Psoas muscle (tissue), 8 donors: ENCODE measurements at regions of chr1 and their contacts with region 1.

Region 1: DNA sequence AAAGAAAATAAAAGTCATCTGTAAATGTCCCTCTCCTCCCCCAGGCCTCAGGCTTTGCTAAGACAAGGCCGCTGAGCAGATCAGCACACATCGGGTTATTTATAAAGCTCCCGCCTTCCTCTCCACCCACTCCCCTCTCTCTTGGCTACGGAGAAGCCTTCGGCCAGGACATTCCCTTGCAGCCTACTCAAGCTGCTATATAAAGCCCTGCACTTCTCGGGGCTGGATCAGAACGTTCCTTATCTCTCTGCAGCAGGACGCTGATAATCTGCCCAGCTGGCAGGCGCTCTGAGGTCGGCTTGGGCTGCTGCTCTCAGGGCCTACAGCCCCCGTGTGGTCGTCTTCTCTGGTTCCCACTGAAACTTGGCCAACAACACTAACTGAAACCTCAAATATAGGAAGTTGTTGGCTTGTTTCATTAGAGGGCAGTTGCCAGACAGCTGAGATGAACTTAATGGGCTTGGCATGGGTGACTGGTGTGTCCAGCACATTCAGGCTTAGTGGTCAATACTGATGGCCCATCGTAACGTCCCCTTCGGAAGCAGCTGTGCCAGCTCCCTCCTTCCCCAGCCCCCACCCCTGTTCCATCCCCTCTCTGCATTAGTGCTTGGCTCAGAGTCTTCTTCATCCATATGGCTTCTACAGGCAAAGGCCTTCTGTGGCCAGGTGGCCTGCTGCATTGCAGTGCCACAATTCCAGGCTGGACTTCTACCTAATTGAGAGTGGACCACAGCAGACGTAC is 64.6 kb downstream of the IER5 start:
- DNase-seq: peak; percentile 84 to 95
- ATAC-seq: peak; percentile 88 to 94 (median 90)
- H3K4me3 ChIP-seq: peak overlapping the region; percentile 2
- H3K27ac ChIP-seq: peak overlapping the region; percentile 96
- H3K4me1 ChIP-seq: peaks cover 49% of the 10 kb centered on the region
- H3K27me3 ChIP-seq: no peaks in the 10 kb centered on the region
- CTCF ChIP-seq: peak; percentile 35

Region 2: GRCh38 chr1:180502360-180503273 is 650.4 kb before region 1 on chr1 and contains the start of gene ACBD6:
- intact Hi-C with region 1: loop called in 1 of 2 experiments (anchors 10 kb)
- DNase-seq: peak; percentile 86 to 90
- ATAC-seq: peak; percentile 93 to 96 (median 94)
- H3K4me3 ChIP-seq: peak within 1 kb of the TSS; percentile 94
- H3K27ac ChIP-seq: peak within 1 kb of the TSS; percentile 92
- H3K4me1 ChIP-seq: peaks cover 26% of the 10 kb centered on the region
- H3K27me3 ChIP-seq: no peaks in the 10 kb centered on the region
- CTCF ChIP-seq: no peak
- total RNA-seq, gene ACBD6: 12.6 to 20.4 (median 15.0) TPM

Region 3: GRCh38 chr1:180988253-180988752 is 164.8 kb before region 1 on chr1:
- intact Hi-C with region 1: no loop called
- DNase-seq: no peak
- ATAC-seq: no peak
- H3K4me3 ChIP-seq: no peak overlapping the region
- H3K27ac ChIP-seq: no peak overlapping the region
- H3K4me1 ChIP-seq: no peaks in the 10 kb centered on the region
- H3K27me3 ChIP-seq: no peaks in the 10 kb centered on the region
- CTCF ChIP-seq: no peak

Region 4: DNA sequence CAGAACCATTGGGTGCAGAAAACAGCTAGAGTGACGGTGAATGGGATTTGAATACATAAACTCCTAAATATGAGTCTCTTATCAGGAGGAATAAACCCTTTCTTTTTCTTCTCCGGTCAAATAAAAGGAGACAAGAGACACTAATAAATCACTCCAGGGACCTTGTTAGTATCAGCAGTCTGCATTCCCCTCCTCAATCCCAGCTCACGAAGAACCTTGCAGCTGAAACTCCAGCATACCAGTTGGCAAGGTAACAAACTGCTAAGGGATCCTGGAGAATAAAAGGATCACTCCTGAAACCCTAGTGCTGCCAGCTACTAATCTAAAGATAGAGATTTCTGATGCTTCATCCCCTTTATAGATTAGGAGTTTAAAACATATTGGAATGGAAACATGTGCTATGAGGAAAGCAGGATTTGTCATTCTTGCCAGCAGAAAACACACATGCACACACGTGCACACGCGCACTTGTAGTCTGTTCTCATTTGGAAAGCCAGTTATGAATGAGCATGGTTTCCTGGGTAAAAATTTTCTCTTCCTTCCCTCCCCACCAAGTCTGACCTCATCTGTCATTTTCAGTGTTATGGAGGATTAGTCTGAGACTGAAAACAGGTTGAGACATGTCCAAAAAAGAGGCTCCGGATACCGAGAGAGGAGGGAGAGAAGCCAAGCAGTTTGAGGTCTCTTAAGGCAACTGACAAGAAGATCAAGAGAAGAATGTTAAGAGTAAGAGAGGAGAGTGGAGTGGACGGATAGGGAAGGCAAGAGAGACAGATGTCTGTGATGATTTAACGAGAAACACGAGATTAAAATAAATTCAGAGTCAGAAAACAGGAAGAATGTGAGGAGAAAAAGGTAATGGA is 53.7 kb before region 1 on chr1:
- intact Hi-C with region 1: no loop called
- DNase-seq: no peak
- ATAC-seq: peak in 1 of 4 donors; percentile 48
- H3K4me3 ChIP-seq: no peak overlapping the region
- H3K27ac ChIP-seq: no peak overlapping the region
- H3K4me1 ChIP-seq: peaks cover 58% of the 10 kb centered on the region
- H3K27me3 ChIP-seq: no peaks in the 10 kb centered on the region
- CTCF ChIP-seq: no peak